CD4-positive, alpha-beta T cell (primary cell): ENCODE measurements at regions of chr7 and their contacts with region 1.

Region 1: DNA sequence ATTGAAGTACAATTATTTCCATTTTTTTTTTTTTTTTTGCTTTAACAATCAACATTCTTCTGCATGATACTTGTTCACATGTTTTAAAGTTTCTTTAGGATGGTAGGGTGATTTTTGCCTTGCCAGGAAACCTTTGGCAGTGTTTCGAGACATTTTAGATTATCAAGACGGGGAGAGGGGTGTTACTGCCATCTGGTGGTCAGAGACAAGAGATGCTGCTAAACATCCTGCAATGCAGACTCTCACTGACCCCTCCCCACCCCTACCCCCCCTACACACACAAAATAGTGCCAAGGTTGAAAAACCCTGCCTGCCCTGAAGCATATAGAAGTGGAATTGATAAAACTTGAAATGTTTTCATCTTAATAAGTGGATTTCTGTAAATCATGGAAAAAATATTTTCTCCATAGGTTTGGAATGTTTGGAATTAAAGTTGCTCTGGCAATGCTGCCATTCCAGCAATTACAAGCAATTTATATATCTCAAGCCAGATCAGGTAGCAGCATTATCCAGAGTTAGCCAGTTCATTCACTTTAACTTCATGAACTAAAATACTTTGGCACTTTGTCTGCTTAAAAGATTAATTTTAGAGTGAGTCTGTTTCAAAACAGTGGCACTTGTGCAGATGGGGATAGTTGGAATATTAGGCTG is 62.1 kb downstream of the SDHAF3 start:
- DNase-seq: peak in 13 of 14 experiments; percentile 4 to 75 (median 25)
- ATAC-seq: peak; percentile 77
- H3K4me3 ChIP-seq: no peak overlapping the region
- H3K4me3 Mint-ChIP-seq: no peak overlapping the region
- H3K27ac ChIP-seq: no peak overlapping the region
- H3K27ac Mint-ChIP-seq: no peak overlapping the region
- H3K4me1 ChIP-seq: no peaks in the 10 kb centered on the region
- H3K4me1 Mint-ChIP-seq: no peaks in the 10 kb centered on the region
- H3K27me3 ChIP-seq: no peaks in the 10 kb centered on the region
- H3K27me3 Mint-ChIP-seq: no peaks in the 10 kb centered on the region
- CTCF ChIP-seq: peak; percentile 84

Region 2: GRCh38 chr7:95916573-95917297 is 1262.8 kb before region 1 on chr7:
- CTCF ChIA-PET with region 1: no interaction called
- POLR2A ChIA-PET with region 1: no interaction called
- intact Hi-C with region 1: loop called (anchors 1 to 2 kb)
- DNase-seq: peak; percentile 50 to 79 (median 66)
- ATAC-seq: no peak
- H3K4me3 ChIP-seq: no peak overlapping the region
- H3K4me3 Mint-ChIP-seq: no peak overlapping the region
- H3K27ac ChIP-seq: no peak overlapping the region
- H3K27ac Mint-ChIP-seq: no peak overlapping the region
- H3K4me1 ChIP-seq: no peaks in the 10 kb centered on the region
- H3K4me1 Mint-ChIP-seq: no peaks in the 10 kb centered on the region
- H3K27me3 ChIP-seq: peaks cover 0 to 9% of the 10 kb centered on the region in 2 experiments
- H3K27me3 Mint-ChIP-seq: peaks cover 58% of the 10 kb centered on the region
- CTCF ChIP-seq: peak; percentile 92

Region 3: DNA sequence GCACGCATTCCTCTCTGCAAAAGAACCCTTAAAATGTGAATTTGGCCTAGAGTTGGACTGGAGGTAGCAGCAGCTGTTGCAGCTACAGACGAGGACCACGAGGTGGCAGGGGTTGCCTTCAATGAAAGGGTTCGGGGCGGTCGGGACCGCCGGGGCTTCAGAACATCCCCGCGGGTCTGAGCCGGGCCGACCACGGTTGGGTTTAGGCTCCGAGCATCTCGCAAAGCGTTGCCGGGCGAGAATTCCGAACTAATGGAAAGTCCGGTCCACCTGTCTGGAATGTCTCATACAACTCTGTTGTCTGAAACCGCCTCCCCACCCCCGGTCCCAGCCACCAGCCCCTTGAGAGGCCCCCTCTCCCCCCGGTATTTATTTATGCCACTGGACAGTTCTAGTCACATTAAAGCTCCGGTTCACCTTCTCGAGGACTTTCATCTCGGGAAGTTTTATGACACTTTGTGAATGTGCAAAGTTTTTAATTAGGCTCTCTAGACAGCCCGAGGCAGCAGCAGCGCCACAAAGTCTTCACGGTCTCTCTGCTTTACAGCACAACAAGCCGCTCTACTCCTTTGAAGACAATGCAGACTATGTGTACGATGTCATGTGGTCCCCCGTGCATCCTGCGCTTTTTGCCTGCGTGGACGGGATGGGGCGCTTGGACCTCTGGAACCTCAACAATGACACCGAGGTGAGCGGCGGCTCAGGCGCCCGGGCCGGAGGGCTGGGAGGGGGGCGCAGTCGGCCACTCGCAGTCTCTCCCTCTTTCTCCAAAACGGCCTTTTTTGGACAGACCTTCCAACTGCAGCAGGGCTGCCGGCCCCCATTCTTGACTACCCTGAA is 1103.8 kb before region 1 on chr7:
- CTCF ChIA-PET with region 1: no interaction called
- POLR2A ChIA-PET with region 1: no interaction called
- intact Hi-C with region 1: loop called in 1 of 2 experiments (anchors 1 kb)
- DNase-seq: peak; percentile 20 to 66 (median 28)
- ATAC-seq: peak; percentile 80
- H3K4me3 ChIP-seq: peak overlapping the region; percentile 41
- H3K4me3 Mint-ChIP-seq: peak overlapping the region; percentile 90
- H3K27ac ChIP-seq: no peak overlapping the region
- H3K27ac Mint-ChIP-seq: no peak overlapping the region
- H3K4me1 ChIP-seq: peaks cover 11% of the 10 kb centered on the region
- H3K4me1 Mint-ChIP-seq: peaks cover 8% of the 10 kb centered on the region
- H3K27me3 ChIP-seq: peaks cover 11 to 46% of the 10 kb centered on the region in 2 experiments
- H3K27me3 Mint-ChIP-seq: peaks cover 58% of the 10 kb centered on the region
- CTCF ChIP-seq: peak; percentile 72

Region 4: GRCh38 chr7:97104719-97105238 is 74.8 kb before region 1 on chr7:
- CTCF ChIA-PET with region 1: no interaction called
- POLR2A ChIA-PET with region 1: no interaction called
- intact Hi-C with region 1: loop called (anchors 1 kb)
- DNase-seq: peak; percentile 46 to 77 (median 53)
- ATAC-seq: peak; percentile 21
- H3K4me3 ChIP-seq: no peak overlapping the region
- H3K4me3 Mint-ChIP-seq: no peak overlapping the region
- H3K27ac ChIP-seq: no peak overlapping the region
- H3K27ac Mint-ChIP-seq: no peak overlapping the region
- H3K4me1 ChIP-seq: no peaks in the 10 kb centered on the region
- H3K4me1 Mint-ChIP-seq: no peaks in the 10 kb centered on the region
- H3K27me3 ChIP-seq: peaks cover 0 to 6% of the 10 kb centered on the region in 2 experiments
- H3K27me3 Mint-ChIP-seq: peaks cover 37% of the 10 kb centered on the region
- CTCF ChIP-seq: peak; percentile 64